B cell (primary cell): ENCODE measurements at regions of chrX and their contacts with region 1.

Region 1: DNA sequence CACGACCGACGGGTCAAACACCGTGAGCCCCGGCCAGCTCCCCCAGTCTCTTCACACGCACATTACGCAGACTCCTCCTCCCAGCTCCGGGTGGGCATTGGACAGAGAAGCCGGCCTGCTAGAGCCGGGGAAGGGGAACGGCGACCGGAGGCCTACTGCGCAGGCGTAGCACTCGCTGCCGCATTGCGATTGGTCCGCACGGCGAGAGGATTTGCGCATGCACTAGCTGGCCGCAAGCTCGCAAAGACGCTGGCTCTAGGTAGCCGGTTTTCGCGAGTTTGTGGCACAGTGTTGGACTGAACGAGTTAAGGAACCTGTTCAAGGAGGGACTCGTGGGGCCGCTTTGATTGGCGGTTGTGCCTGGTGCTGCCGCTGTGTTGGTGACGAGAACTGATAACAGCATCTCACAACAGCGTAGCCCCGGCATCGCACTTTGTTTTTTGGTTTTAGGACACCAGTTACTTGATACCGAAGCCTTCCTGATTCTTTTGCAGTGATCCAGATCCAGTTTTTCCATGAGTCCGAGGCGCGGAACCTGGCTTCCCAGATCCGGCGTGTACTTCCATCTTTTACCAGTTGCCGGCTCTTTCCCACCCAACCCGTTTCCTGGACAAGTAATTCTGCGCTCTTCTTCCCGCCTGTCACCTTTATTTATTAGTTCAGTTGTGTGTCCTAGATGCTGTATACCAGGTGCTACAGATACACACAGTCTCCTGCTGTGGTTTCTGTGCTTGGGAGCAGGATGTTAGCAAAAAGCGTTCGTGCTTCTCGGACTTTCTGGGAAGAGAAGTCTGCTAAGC is at the start of gene AIFM1:
- DNase-seq: peak; percentile 92
- ATAC-seq: peak; percentile 88
- H3K4me3 ChIP-seq: peak within 1 kb of the TSS; percentile 61 to 76 (median 66)
- H3K4me3 Mint-ChIP-seq: peak within 1 kb of the TSS; percentile 95
- H3K27ac ChIP-seq: peak within 1 kb of the TSS; percentile 54 to 77
- H3K27ac Mint-ChIP-seq: peak within 1 kb of the TSS; percentile 96
- H3K4me1 ChIP-seq: peaks cover 13 to 21% of the 10 kb centered on the region in 2 donors
- H3K4me1 Mint-ChIP-seq: peaks cover 31% of the 10 kb centered on the region
- H3K27me3 ChIP-seq: no peaks in the 10 kb centered on the region
- H3K27me3 Mint-ChIP-seq: no peaks in the 10 kb centered on the region
- CTCF ChIP-seq: no peak
- total RNA-seq, gene AIFM1: 14.8 and 15.9 TPM in 2 replicates

Region 2: GRCh38 chrX:129565046-129565650 is 600.8 kb before region 1 on chrX:
- CTCF ChIA-PET with region 1: no interaction called
- POLR2A ChIA-PET with region 1: no interaction called
- intact Hi-C with region 1: no loop called
- DNase-seq: no peak
- ATAC-seq: no peak
- H3K4me3 ChIP-seq: no peak overlapping the region
- H3K4me3 Mint-ChIP-seq: no peak overlapping the region
- H3K27ac ChIP-seq: no peak overlapping the region
- H3K27ac Mint-ChIP-seq: no peak overlapping the region
- H3K4me1 ChIP-seq: peaks cover 0 to 4% of the 10 kb centered on the region in 2 donors
- H3K4me1 Mint-ChIP-seq: peaks cover 7% of the 10 kb centered on the region
- H3K27me3 ChIP-seq: no peaks in the 10 kb centered on the region
- H3K27me3 Mint-ChIP-seq: no peaks in the 10 kb centered on the region
- CTCF ChIP-seq: no peak

Region 3: DNA sequence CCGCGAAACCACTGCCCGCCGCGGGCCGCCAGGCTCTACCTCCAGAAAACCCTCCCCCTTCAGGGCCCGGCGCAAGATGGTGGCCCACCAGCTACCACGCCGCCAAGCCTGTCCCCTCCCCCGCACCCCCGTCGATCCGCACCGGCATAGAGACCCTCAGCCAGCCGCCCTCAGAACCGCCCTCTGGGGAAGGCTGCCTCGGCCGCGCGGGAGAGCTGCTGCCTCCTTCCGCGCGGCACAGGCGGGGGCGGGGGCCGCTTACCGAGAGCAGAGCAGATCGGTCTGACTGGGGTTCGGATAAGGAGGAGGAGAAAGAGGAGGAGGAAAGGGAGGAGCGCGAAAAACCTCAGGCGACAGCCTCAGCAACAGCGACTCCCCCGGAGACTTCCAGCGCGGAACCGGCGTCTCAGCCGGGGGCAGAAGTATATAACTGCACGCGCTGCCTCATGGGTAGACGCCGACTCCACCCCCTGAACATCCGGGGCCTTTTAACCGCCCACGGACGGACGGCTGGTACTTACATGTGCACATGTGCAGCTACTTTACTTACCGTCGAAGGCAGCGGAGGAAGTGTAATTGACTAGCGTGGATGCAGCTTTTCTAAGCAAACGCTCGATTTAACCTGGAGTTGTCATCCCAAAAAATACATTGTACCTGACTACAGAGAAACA is 102.7 kb after region 1 on chrX and contains the start of gene ZNF280C:
- CTCF ChIA-PET with region 1: no interaction called
- POLR2A ChIA-PET with region 1: no interaction called
- intact Hi-C with region 1: loop called (anchors 5 kb)
- DNase-seq: peak; percentile 92
- ATAC-seq: peak; percentile 93
- H3K4me3 ChIP-seq: peak within 1 kb of the TSS; percentile 63 to 78 (median 66)
- H3K4me3 Mint-ChIP-seq: peak within 1 kb of the TSS; percentile 89
- H3K27ac ChIP-seq: peak within 1 kb of the TSS; percentile 56 to 69
- H3K27ac Mint-ChIP-seq: peak within 1 kb of the TSS; percentile 92
- H3K4me1 ChIP-seq: peaks cover 4 to 12% of the 10 kb centered on the region in 2 donors
- H3K4me1 Mint-ChIP-seq: peaks cover 12% of the 10 kb centered on the region
- H3K27me3 ChIP-seq: no peaks in the 10 kb centered on the region
- H3K27me3 Mint-ChIP-seq: no peaks in the 10 kb centered on the region
- CTCF ChIP-seq: peak; percentile 23
- total RNA-seq, gene ZNF280C: 7.0 and 7.1 TPM in 2 replicates